Transverse colon (tissue), 4 donors: ENCODE measurements at regions of chr12 and their contacts with region 1.

Region 1: GRCh38 chr12:53344824-53345485 is 8.8 kb upstream of the SP7 start:
- DNase-seq: peak; percentile 78
- H3K4me3 ChIP-seq: peak overlapping the region; percentile 56 to 67 (median 59)
- H3K27ac ChIP-seq: peak overlapping the region; percentile 80 to 89 (median 86)
- H3K4me1 ChIP-seq: peaks cover 0 to 13% (median 5%) of the 10 kb centered on the region in 4 donors
- H3K27me3 ChIP-seq: no peaks in the 10 kb centered on the region
- CTCF ChIP-seq: peak; percentile 63 to 80 (median 72)
- EP300 ChIP-seq: no peak
- POLR2A ChIP-seq: peak; percentile 21

Region 2: GRCh38 chr12:53324779-53325510 is 20.0 kb before region 1 on chr12:
- in situ Hi-C with region 1: no loop called
- intact Hi-C with region 1: loop called (anchors 1 kb)
- DNase-seq: peak; percentile 93
- H3K4me3 ChIP-seq: peak overlapping the region; percentile 22 to 77 (median 55)
- H3K27ac ChIP-seq: peak overlapping the region; percentile 87 to 90 (median 90)
- H3K4me1 ChIP-seq: peaks cover 7 to 42% (median 27%) of the 10 kb centered on the region in 4 donors
- H3K27me3 ChIP-seq: peaks cover 30% of the 10 kb centered on the region
- CTCF ChIP-seq: peak; percentile 72 to 91 (median 82)
- EP300 ChIP-seq: no peak
- POLR2A ChIP-seq: peak; percentile 62

Region 3: GRCh38 chr12:53378724-53379388 is 33.9 kb after region 1 on chr12:
- in situ Hi-C with region 1: no loop called
- intact Hi-C with region 1: no loop called
- DNase-seq: no peak
- H3K4me3 ChIP-seq: peak overlapping the region; percentile 33 to 48 (median 36)
- H3K27ac ChIP-seq: peak overlapping the region; percentile 90 to 96 (median 92)
- H3K4me1 ChIP-seq: peaks cover 25 to 41% (median 37%) of the 10 kb centered on the region in 4 donors
- H3K27me3 ChIP-seq: no peaks in the 10 kb centered on the region
- CTCF ChIP-seq: no peak
- EP300 ChIP-seq: no peak
- POLR2A ChIP-seq: no peak

Region 4: GRCh38 chr12:53414756-53415417 is 69.9 kb after region 1 on chr12:
- in situ Hi-C with region 1: loop called in 2 of 4 experiments (anchors 5 kb)
- intact Hi-C with region 1: no loop called
- DNase-seq: no peak
- H3K4me3 ChIP-seq: no peak overlapping the region
- H3K27ac ChIP-seq: peak overlapping the region; percentile 26 to 72 (median 42)
- H3K4me1 ChIP-seq: peaks cover 3 to 55% (median 10%) of the 10 kb centered on the region in 4 donors
- H3K27me3 ChIP-seq: no peaks in the 10 kb centered on the region
- CTCF ChIP-seq: no peak
- EP300 ChIP-seq: no peak
- POLR2A ChIP-seq: no peak

Region 5: DNA sequence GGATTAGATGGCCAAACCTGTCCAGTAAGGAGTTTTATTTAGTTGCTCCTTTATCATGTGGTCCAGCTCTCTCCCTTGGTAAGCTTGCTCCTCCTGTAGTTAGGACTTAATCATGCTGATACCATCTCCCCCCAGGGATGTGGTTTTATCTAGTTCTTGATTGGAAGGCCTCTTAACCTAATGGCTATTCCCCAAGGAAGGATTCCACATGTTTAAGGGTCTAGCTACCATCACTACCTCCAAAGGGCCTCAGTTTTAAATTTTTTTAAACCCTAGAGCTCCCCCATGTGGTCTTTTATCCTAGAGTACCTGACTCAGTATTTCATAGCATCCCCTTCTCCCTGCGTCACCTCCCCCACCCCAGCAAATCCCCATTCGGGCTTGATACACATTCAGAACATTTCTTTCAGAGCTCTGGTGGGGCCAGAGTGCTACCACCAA is 131.8 kb after region 1 on chr12:
- in situ Hi-C with region 1: no loop called
- intact Hi-C with region 1: no loop called
- DNase-seq: no peak
- H3K4me3 ChIP-seq: no peak overlapping the region
- H3K27ac ChIP-seq: no peak overlapping the region
- H3K4me1 ChIP-seq: peaks cover 0 to 22% (median 9%) of the 10 kb centered on the region in 4 donors
- H3K27me3 ChIP-seq: no peaks in the 10 kb centered on the region
- CTCF ChIP-seq: peak in 1 of 5 experiments; percentile 10
- EP300 ChIP-seq: no peak
- POLR2A ChIP-seq: no peak

Region 6: DNA sequence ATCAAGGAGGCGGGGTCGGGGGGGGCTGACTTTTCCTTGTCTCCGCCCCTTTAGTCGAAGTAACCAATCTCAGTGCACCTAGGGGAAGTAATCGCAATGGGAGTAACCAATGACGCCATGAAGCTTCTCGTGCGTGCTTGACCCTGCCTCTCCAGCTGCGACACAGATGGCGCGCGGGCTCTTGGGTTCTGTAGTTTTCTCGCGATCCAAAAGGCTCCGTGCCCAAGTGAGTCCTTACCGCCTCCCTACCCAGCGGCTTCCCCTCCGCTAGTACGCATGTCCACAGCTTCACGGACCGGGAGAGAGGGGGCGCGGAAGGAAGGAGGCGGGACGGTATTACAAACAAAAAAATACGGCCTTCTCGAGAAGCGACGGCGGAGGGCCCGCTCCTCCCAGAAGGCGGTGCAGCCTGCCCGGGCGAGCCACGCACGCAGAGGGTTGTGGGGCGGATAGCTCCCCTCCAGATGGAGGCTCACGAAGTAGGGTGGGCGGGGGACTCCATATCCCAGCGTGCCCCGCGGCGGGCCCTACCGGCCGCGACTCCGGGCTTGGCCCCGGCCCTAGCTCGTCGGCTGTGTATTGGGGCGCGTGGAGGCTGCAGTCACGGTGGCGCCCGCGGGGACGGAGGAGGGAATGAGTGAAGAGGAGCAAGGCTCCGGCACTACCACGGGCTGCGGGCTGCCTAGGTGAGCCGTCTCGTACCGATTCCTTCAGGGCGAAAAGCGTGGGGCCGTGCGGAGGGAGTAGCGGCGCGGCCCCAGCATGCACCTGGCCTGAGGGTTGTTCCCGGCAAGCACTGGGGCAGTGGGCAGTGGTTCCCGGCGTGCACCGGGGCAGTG is 156.0 kb after region 1 on chr12 and contains the start of gene TARBP2:
- in situ Hi-C with region 1: loop called in 1 of 4 experiments (anchors 10 kb)
- intact Hi-C with region 1: loop called (anchors 10 kb)
- DNase-seq: peak; percentile 99
- H3K4me3 ChIP-seq: peak within 1 kb of the TSS; percentile 53 to 78 (median 64)
- H3K27ac ChIP-seq: peak within 1 kb of the TSS; percentile 90 to 99 (median 98)
- H3K4me1 ChIP-seq: peaks cover 13 to 45% (median 31%) of the 10 kb centered on the region in 4 donors
- H3K27me3 ChIP-seq: no peaks in the 10 kb centered on the region
- CTCF ChIP-seq: peak in 1 of 5 experiments; percentile 33
- EP300 ChIP-seq: no peak
- POLR2A ChIP-seq: peak; percentile 63
- total RNA-seq, gene TARBP2: 22.4 to 37.0 (median 34.1) TPM